ENCODE measurements at regions of chr6 and their contacts with region 1.

Region 1: DNA sequence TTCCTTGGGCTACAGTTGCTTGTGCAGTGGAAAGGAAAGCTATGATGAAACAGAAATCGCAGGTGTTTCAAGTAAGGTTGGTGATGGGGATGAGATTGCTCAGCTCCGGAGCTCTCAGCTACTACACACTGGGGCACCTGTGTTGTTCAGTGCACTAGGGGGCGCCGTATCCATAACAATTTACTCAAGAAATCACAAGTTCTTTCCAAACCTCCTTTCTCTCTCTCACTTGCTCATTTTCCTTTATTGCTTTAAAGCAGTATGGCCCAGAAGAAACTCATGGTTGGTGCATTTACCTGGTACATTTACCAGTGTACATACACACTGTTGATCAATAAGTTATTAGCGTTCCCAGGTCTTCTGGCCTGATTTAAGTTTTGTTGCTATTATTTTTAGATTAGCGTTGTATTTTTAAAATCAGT is 235.2 kb upstream of the TAB2 start:
- DNase-seq: peak; percentile 58
- H3K4me3 ChIP-seq: no peak overlapping the region; a peak in 1 of 4 replicates
- H3K27ac ChIP-seq: no peak overlapping the region
- H3K4me1 ChIP-seq: peaks cover 9 to 22% of the 10 kb centered on the region in 2 experiments
- H3K27me3 ChIP-seq: no peaks in the 10 kb centered on the region
- CTCF ChIP-seq: peak; percentile 76
- EP300 ChIP-seq: no peak; a peak in 1 of 4 replicates
- RAD21 ChIP-seq: peak; percentile 94

Region 2: GRCh38 chr6:148915810-148916209 is 166.5 kb before region 1 on chr6:
- CTCF ChIA-PET with region 1: no interaction called
- POLR2A ChIA-PET with region 1: no interaction called
- DNase-seq: no peak
- H3K4me3 ChIP-seq: no peak overlapping the region
- H3K27ac ChIP-seq: no peak overlapping the region
- H3K4me1 ChIP-seq: no peaks in the 10 kb centered on the region
- H3K27me3 ChIP-seq: peaks cover 6% of the 10 kb centered on the region; the same call in 1 of the 2 replicates
- CTCF ChIP-seq: no peak
- EP300 ChIP-seq: no peak
- RAD21 ChIP-seq: no peak

Region 3: DNA sequence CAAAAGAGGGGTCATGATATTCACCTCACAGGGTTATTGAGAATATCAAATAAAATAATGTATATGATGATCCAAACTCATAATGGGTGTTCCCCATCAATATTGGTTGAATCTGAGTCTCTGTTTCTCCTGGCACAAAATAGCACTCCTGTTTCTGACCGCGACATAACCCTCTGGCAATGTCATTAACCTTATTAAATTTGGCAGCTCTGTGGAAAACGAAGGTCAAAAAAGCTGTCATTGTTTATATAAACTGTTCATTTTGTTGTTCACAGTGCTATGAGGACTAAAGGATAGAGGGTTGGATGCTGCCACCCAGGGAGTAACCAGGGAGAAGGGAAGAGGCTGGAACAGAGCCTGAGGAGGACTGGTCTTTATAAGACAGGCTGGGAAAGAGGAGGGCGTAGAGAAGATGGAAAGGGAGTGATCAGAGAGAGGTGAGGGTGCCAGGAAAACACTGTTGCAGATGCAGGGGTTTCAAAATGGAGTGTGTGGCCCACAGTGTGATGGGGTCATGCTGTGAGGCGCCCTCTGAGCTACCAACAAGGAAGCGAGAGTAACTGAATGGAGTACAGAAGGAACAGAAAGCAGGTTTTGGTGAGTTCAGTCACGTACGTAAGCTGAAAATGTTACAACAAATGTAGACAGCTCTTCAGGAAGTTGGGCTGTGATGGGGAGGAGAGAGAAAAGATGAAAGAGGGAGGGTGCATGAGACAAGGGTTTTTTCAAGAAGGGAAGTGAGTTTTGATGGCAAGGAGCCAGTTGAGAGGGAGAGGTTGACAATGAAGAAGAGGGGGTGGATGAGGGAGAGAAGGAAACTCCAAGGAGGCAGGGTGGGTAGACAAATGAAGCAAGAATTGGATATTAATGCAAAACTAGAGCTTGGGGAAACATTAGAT is 16.4 kb before region 1 on chr6:
- CTCF ChIA-PET with region 1: interaction called, 22 read pairs
- POLR2A ChIA-PET with region 1: no interaction called
- DNase-seq: no peak
- H3K4me3 ChIP-seq: no peak overlapping the region
- H3K27ac ChIP-seq: no peak overlapping the region
- H3K4me1 ChIP-seq: peaks cover 3 to 10% of the 10 kb centered on the region in 2 experiments; a peak in 2 of 4 replicates
- H3K27me3 ChIP-seq: no peaks in the 10 kb centered on the region
- CTCF ChIP-seq: no peak
- EP300 ChIP-seq: no peak
- RAD21 ChIP-seq: no peak

Region 4: DNA sequence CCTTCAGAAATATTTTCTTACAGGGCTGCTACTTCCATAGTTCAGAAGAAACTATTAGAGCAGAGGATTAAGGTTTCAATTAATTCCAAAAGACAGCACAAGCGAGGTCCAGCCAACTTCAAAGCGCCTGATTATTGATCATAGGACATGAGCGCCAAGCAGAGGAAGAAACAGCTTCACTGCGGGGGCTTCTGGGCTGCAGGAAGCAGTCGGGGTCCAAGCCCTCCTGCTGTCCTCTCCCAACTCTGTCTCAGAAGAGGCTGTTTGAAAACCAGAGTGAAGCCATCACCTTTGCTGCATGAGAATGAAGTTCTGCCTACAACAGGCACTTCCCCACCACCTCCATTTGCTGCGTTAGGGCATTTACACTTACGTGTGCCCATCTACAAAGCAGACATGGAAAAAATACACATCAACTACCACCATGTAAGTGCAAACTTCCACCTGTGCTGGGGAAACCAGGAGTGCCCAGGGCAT is 341.7 kb after region 1 on chr6:
- CTCF ChIA-PET with region 1: interaction called, 158 read pairs
- POLR2A ChIA-PET with region 1: no interaction called
- DNase-seq: no peak
- H3K4me3 ChIP-seq: no peak overlapping the region
- H3K27ac ChIP-seq: no peak overlapping the region
- H3K4me1 ChIP-seq: no peaks in the 10 kb centered on the region
- H3K27me3 ChIP-seq: no peaks in the 10 kb centered on the region
- CTCF ChIP-seq: no peak
- EP300 ChIP-seq: no peak
- RAD21 ChIP-seq: no peak

Region 5: DNA sequence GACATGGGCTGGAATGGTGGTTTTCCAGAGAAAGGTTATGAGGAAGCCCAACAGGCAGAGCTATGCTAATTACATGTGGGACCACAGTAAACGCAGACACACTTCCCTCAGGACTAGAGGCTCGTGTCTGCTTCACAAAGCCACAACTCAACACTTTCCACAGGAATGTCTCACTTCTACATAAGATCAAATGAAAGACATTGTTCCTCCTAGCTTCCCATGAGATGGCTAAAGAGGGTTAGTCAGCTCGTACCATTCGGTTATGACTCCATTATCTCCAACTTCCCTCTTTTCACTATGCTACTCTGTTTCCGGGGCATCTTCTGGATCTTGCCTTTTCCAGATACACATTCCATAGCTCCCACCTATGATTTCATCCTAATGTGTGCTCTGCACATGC is 431.6 kb after region 1 on chr6:
- CTCF ChIA-PET with region 1: interaction called, 22 read pairs
- POLR2A ChIA-PET with region 1: no interaction called
- DNase-seq: no peak
- H3K4me3 ChIP-seq: no peak overlapping the region
- H3K27ac ChIP-seq: no peak overlapping the region
- H3K4me1 ChIP-seq: peaks cover 0 to 3% of the 10 kb centered on the region in 2 experiments; a peak in 1 of 4 replicates
- H3K27me3 ChIP-seq: no peaks in the 10 kb centered on the region
- CTCF ChIP-seq: no peak
- EP300 ChIP-seq: no peak
- RAD21 ChIP-seq: no peak

Measured in SK-N-SH (cell line).